ENCODE measurements at regions of chrX and their contacts with region 1.

Region 1: GRCh38 chrX:77597090-77597489 is 149.9 kb downstream of the FGF16 start:
- DNase-seq: no peak
- H3K4me3 Mint-ChIP-seq: no peak overlapping the region
- H3K27ac Mint-ChIP-seq: no peak overlapping the region
- H3K4me1 Mint-ChIP-seq: peaks cover 4% of the 10 kb centered on the region
- H3K27me3 Mint-ChIP-seq: no peaks in the 10 kb centered on the region

Region 2: DNA sequence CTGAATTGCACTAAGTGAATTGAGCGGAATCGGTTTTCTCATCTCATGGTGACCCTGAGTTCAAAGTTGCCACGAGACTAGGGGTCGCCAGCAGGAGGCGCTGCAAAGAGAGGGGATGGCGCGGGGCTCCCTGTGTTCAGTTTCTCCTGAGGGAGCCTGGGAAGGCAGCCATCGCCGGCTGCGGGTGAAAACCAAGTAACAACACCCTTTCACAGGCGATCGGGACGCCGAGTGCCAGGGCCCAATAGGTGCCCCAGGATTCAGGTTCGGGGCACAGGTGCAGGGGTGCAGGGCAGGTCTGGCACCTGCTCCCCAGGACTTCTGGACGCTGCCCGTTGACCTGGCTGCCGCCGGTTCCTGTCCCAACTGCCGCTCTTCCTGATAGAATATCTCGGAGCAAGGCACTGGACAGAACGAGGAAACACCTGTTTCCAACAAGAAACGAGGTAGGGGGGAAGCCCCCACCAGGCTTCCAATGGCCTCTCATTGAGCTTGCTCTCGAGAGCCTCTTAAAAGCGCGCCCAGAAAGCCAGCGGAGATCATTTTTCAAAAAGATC is 151.0 kb before region 1 on chrX:
- CTCF ChIA-PET with region 1: no interaction called
- intact Hi-C with region 1: loop called (anchors 10 kb)
- DNase-seq: peak; percentile 48
- H3K4me3 Mint-ChIP-seq: peak overlapping the region; percentile 72
- H3K27ac Mint-ChIP-seq: no peak overlapping the region
- H3K4me1 Mint-ChIP-seq: peaks cover 3% of the 10 kb centered on the region
- H3K27me3 Mint-ChIP-seq: peaks cover 14% of the 10 kb centered on the region

Region 3: DNA sequence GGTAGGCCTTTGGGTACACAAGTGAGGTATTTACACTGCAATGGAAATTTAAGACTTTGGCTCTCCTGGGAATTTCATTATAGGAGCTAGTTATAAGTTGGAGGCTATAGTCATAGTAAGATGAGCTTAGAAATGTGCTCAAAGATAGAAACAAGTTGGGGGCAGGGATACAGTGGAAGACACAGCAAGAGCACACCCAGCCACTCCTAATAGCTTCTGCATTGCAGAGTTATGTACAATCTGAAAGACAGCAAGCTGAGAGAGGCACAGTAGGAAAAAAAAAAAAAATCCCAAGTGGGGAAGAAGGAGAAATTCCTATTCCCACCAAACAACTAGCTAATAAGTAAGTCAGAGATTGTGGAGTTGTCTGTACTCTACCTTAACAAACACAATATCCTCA is 584.2 kb after region 1 on chrX:
- CTCF ChIA-PET with region 1: no interaction called
- intact Hi-C with region 1: no loop called
- DNase-seq: no peak
- H3K4me3 Mint-ChIP-seq: no peak overlapping the region
- H3K27ac Mint-ChIP-seq: no peak overlapping the region
- H3K4me1 Mint-ChIP-seq: no peaks in the 10 kb centered on the region
- H3K27me3 Mint-ChIP-seq: no peaks in the 10 kb centered on the region